ENCODE measurements at regions of chr1 and their contacts with region 1.

Region 1: GRCh38 chr1:23184212-23184934 is 15.7 kb upstream of the LUZP1 start:
- DNase-seq: peak; percentile 64
- H3K4me3 ChIP-seq: peak overlapping the region; percentile 15 to 51; a peak in 3 of 4 replicates
- H3K27ac ChIP-seq: no peak overlapping the region
- H3K4me1 ChIP-seq: peaks cover 0 to 7% of the 10 kb centered on the region in 2 experiments; a peak in 3 of 4 replicates
- H3K27me3 ChIP-seq: no peaks in the 10 kb centered on the region
- CTCF ChIP-seq: peak; percentile 90
- EP300 ChIP-seq: no peak
- RAD21 ChIP-seq: peak; percentile 89

Region 2: GRCh38 chr1:22963044-22963677 is 221.2 kb before region 1 on chr1:
- CTCF ChIA-PET with region 1: interaction called, 24 read pairs
- POLR2A ChIA-PET with region 1: no interaction called
- DNase-seq: no peak
- H3K4me3 ChIP-seq: no peak overlapping the region
- H3K27ac ChIP-seq: no peak overlapping the region
- H3K4me1 ChIP-seq: no peaks in the 10 kb centered on the region
- H3K27me3 ChIP-seq: no peaks in the 10 kb centered on the region
- CTCF ChIP-seq: no peak
- EP300 ChIP-seq: no peak
- RAD21 ChIP-seq: no peak

Region 3: GRCh38 chr1:23019094-23019862 is 165.1 kb before region 1 on chr1 and contains the start of gene KDM1A:
- CTCF ChIA-PET with region 1: interaction called, 16 read pairs
- POLR2A ChIA-PET with region 1: interaction called, 3 read pairs
- DNase-seq: peak; percentile 95
- H3K4me3 ChIP-seq: peak within 1 kb of the TSS; percentile 75 to 98
- H3K27ac ChIP-seq: peak within 1 kb of the TSS; percentile 68 to 83
- H3K4me1 ChIP-seq: no peaks in the 10 kb centered on the region
- H3K27me3 ChIP-seq: no peaks in the 10 kb centered on the region
- CTCF ChIP-seq: peak; percentile 45
- EP300 ChIP-seq: peak; percentile 33 to 51; a peak in 2 of 4 replicates
- RAD21 ChIP-seq: no peak
- polyA plus RNA-seq, gene KDM1A: 71.0 and 78.5 TPM in 2 replicates

Region 4: DNA sequence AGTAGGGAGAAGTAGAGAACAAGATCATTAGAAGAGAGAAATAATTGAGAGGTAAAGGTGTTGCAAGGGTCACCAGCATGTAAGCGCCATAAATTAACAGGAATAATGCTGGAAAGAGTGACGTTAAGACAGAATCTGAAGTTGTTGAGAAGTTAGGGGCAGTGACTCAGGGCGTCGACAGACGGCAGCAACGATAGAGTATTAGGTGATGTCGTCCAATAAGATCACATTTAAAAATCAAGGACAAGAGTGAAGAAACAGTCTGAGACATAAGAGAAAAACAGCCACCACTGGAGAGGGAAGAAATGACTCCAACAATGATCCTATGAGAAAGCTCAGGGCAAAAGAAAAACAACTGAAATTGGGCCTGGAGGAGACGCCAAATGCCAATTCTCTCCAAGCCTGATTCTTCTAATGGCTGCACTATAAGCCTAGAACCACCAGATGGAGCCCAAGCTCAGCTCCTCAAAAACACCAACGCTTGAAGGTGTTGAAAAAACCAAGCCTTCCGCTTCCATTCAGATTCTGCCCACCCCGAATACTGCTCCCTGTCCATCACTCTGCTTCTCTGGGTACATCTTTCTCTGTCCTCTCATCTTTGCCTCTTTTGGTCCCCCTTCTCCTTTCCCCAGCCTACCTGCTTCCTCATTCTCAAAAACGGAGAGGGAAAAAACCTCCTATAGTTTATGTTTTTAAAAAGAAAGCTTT is 85.8 kb before region 1 on chr1:
- CTCF ChIA-PET with region 1: interaction called, 419 read pairs
- POLR2A ChIA-PET with region 1: interaction called, 3 read pairs
- DNase-seq: peak; percentile 63
- H3K4me3 ChIP-seq: peak overlapping the region in 1 of 2 experiments; percentile 25; a peak in 1 of 4 replicates
- H3K27ac ChIP-seq: peak overlapping the region in 1 of 2 experiments; percentile 82; a peak in 2 of 4 replicates
- H3K4me1 ChIP-seq: peaks cover 9 to 46% of the 10 kb centered on the region in 2 experiments
- H3K27me3 ChIP-seq: no peaks in the 10 kb centered on the region
- CTCF ChIP-seq: peak; percentile 91
- EP300 ChIP-seq: no peak
- RAD21 ChIP-seq: peak; percentile 97

Region 5: DNA sequence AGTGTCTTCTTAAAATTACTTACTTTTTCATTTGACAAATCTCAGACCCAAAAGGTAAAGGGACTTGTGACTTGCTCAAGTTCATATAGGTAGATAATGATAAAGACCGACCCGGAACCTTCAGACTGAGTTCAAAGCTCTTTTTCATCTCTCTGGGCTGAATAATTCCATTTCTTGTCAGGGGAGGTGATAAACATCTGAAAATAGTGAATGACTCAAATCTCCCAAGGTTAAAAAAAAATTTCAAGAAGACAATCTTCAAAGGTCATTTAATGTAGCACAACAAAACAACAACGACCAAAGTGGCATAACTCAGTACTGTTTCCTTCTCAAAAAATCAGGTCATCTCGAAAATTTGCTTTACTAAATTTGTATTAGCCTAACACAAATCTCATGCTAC is 36.3 kb before region 1 on chr1:
- CTCF ChIA-PET with region 1: interaction called, 15 read pairs
- POLR2A ChIA-PET with region 1: no interaction called
- DNase-seq: no peak
- H3K4me3 ChIP-seq: no peak overlapping the region
- H3K27ac ChIP-seq: peak overlapping the region; percentile 8 to 39; a peak in 3 of 4 replicates
- H3K4me1 ChIP-seq: peaks cover 4 to 14% of the 10 kb centered on the region in 2 experiments; a peak in 2 of 4 replicates
- H3K27me3 ChIP-seq: no peaks in the 10 kb centered on the region
- CTCF ChIP-seq: no peak
- EP300 ChIP-seq: no peak
- RAD21 ChIP-seq: no peak

Region 6: GRCh38 chr1:23196639-23197328 is 12.4 kb after region 1 on chr1:
- CTCF ChIA-PET with region 1: interaction called, 67 read pairs
- POLR2A ChIA-PET with region 1: no interaction called
- DNase-seq: no peak
- H3K4me3 ChIP-seq: no peak overlapping the region
- H3K27ac ChIP-seq: peak overlapping the region in 1 of 2 experiments; percentile 93; a peak in 2 of 4 replicates
- H3K4me1 ChIP-seq: peaks cover 4 to 19% of the 10 kb centered on the region in 2 experiments; a peak in 3 of 4 replicates
- H3K27me3 ChIP-seq: no peaks in the 10 kb centered on the region
- CTCF ChIP-seq: no peak
- EP300 ChIP-seq: peak in 1 of 2 experiments; percentile 61; a peak in 1 of 4 replicates
- RAD21 ChIP-seq: no peak

Region 7: DNA sequence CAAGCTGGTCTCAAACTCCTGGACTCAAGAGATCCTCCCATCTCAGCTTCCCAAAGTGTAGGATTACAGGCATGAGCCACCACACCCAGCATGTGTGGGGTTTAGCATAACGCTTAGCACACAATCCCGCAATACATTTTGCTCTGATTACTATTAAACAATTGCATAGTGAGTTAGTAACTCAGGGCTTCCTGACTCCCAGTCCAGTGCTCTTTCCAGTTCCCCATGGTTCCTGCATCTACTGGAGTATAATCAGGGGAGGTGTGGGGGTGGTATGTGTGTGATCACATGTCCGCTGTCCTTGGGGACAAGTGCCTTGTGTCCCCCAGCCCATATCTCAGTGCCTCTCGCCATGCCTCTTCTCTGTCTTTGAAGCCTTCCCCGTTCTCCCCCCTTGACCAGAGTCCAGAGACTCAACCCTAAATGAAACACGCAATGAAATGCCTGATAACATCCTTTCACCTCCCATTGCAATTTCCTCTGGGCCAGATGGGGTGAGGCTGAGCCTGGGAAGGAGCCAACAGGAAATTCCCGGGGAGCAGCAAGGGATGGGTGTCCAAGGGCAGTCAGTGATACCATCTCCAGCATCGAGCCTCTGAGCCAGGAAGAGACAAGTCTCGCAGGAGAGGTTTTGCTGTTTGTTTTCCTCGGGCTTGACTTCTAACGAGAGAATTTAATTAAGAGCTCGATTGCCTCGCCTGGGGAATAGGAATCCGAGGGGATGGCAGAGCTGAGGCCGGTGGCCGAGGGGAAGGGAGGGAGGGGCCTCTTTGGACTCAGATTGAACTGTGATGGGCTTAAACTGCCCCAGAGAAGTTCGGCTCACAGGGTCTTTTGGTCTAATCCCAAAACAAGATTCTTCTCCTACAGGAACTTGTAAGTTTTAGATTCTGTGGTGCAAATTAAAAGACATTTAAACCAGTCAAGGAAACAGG is 40.6 kb after region 1 on chr1:
- CTCF ChIA-PET with region 1: interaction called, 13 read pairs
- POLR2A ChIA-PET with region 1: no interaction called
- DNase-seq: peak; percentile 82
- H3K4me3 ChIP-seq: peak overlapping the region; percentile 7 to 18; a peak in 3 of 4 replicates
- H3K27ac ChIP-seq: peak overlapping the region; percentile 72; a peak in 3 of 4 replicates
- H3K4me1 ChIP-seq: peaks cover 8 to 15% of the 10 kb centered on the region in 2 experiments; a peak in 3 of 4 replicates
- H3K27me3 ChIP-seq: no peaks in the 10 kb centered on the region
- CTCF ChIP-seq: no peak
- EP300 ChIP-seq: peak in 1 of 2 experiments; percentile 82; a peak in 2 of 4 replicates
- RAD21 ChIP-seq: no peak

Measured in SK-N-SH (cell line).